Activated naive CD8-positive, alpha-beta T cell treated with anti-CD3 and anti-CD28 coated beads, Interleukin-2, amount 10 ng/mL, durations not matched to agents 7 days and 5 days (primary cell): ENCODE measurements at regions of chrX and their contacts with region 1.

Region 1: GRCh38 chrX:40201329-40201885 is 103.6 kb upstream of the BCOR start:
- DNase-seq: peak; percentile 32
- ATAC-seq: peak; percentile 96
- H3K4me3 Mint-ChIP-seq: peak overlapping the region; percentile 73
- H3K27ac Mint-ChIP-seq: peak overlapping the region; percentile 95
- H3K4me1 Mint-ChIP-seq: peaks cover 18% of the 10 kb centered on the region
- H3K27me3 Mint-ChIP-seq: no peaks in the 10 kb centered on the region

Region 2: GRCh38 chrX:40175511-40176350 is 25.7 kb before region 1 on chrX:
- POLR2A ChIA-PET with region 1: interaction called, 33 read pairs
- DNase-seq: peak; percentile 79
- ATAC-seq: peak; percentile 41
- H3K4me3 Mint-ChIP-seq: peak overlapping the region; percentile 88
- H3K27ac Mint-ChIP-seq: peak overlapping the region; percentile 91
- H3K4me1 Mint-ChIP-seq: peaks cover 26% of the 10 kb centered on the region
- H3K27me3 Mint-ChIP-seq: no peaks in the 10 kb centered on the region